Right cardiac atrium (tissue), 5 donors: ENCODE measurements at regions of chr14 and their contacts with region 1.

Region 1: DNA sequence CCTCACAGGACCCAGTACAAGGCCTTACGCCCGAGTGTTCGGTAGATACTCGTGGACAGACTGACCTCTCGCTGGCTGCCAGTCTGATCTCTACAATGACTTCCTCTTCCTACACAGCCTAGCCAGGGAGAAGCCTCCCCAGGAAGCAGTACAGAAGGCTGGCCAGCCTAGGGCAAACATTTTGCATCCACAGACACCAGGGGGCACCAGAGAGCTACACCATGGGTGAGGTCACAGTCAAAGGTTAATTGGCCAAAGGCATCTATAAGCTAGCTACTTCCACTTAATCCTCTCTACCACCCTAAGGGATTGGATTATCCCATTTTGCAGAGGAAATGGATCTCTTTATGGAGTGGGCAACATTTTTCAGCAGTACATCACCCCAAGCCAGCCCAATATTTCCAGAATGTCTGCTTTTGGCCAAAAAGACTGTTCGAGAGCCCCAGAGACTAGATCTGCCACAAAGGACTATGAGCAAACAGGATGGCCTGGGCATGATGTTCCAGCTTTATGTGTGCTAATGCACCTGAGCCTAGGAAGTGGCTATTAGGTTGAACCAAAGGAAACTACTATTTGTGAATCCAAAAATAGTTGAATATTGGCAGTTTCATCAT is 14.6 kb upstream of the PNMA1 start:
- DNase-seq: peak; percentile 87 to 94 (median 92)
- ATAC-seq: peak; percentile 68 to 71
- H3K4me3 ChIP-seq: no peak overlapping the region
- H3K27ac ChIP-seq: peak overlapping the region; percentile 2
- H3K4me1 ChIP-seq: peaks cover 5% of the 10 kb centered on the region
- H3K27me3 ChIP-seq: no peaks in the 10 kb centered on the region

Region 2: DNA sequence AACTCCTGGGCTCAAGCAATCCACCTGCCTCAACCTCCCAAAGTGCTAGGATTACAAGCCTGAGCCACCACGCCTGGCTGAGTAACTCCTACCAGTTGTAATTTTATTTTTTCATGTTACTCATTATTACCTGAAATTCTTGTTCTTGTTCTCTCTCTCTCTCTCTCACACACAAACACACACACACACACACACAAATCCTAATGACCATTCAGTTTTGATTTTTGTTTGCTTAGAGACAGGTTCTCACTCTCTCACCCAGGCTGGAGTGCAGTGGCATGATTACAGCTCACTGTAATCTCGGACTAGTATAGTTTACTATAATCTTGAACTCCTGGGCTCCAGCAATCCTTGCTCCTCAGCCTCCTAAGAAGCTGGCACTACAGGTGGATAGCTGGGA is 53.8 kb before region 1 on chr14:
- intact Hi-C with region 1: no loop called
- DNase-seq: no peak
- ATAC-seq: no peak
- H3K4me3 ChIP-seq: no peak overlapping the region
- H3K27ac ChIP-seq: no peak overlapping the region
- H3K4me1 ChIP-seq: no peaks in the 10 kb centered on the region
- H3K27me3 ChIP-seq: no peaks in the 10 kb centered on the region

Region 3: DNA sequence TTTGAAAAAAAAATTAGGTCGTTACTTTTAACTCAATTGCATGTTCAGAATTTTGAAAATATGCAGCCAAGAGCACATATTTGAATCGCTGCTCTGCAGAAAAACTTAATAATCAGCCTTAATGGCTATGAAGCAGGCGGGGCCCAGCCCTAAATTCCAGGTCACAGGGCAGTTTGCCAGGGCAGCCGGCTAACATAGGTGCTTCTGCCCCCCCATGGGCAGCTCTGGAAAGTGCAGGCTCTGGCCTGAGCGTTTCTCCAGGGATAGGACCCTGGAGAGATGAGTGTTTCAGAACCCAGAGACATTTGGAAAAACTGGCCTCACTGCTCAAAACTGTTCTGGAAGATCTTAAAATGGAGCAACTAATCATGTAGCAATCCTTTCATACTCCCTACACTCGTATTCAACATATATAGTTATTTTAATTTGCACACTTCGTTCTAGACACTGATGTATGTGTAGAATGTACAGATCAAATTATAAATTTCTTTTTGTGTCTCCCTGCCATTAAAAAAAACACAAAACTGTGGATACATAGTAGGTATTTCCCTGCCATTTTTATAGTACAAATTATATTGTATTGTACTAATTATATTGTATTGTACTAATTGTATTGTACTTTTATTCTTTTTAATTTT is 96.8 kb after region 1 on chr14:
- intact Hi-C with region 1: loop called (anchors 2 to 5 kb)
- DNase-seq: peak; percentile 94 to 98 (median 95)
- ATAC-seq: peak; percentile 92 to 94
- H3K4me3 ChIP-seq: no peak overlapping the region
- H3K27ac ChIP-seq: no peak overlapping the region
- H3K4me1 ChIP-seq: no peaks in the 10 kb centered on the region
- H3K27me3 ChIP-seq: no peaks in the 10 kb centered on the region

Region 4: DNA sequence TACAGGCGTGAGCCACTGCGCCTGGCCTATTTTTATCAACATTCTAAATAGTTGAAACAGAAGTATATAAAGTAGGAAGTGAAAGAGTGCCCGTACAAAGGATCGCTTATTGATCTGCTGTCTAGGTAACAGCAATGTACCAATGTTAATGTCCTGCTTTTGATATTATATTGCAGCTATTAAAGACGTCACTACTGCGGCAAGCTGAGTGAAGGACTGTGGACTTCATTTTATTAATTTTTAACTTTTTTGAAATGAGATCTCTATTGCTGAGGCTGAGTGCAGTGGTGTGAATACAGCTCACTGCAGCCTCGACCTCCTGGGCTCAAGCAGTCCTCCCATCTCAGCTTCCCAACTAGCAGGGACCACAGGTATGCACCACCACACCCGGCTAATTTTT is 133.7 kb after region 1 on chr14:
- intact Hi-C with region 1: loop called in 1 of 4 experiments (anchors 10 kb)
- DNase-seq: no peak
- ATAC-seq: no peak
- H3K4me3 ChIP-seq: no peak overlapping the region
- H3K27ac ChIP-seq: no peak overlapping the region
- H3K4me1 ChIP-seq: no peaks in the 10 kb centered on the region
- H3K27me3 ChIP-seq: no peaks in the 10 kb centered on the region